ENCODE measurements at regions of chr19 and their contacts with region 1.

Region 1: GRCh38 chr19:17282488-17283255 is 971 bp downstream of the ANKLE1 start:
- DNase-seq: peak; percentile 87
- H3K4me3 Mint-ChIP-seq: peak overlapping the region; percentile 85
- H3K27ac Mint-ChIP-seq: no peak overlapping the region
- H3K4me1 Mint-ChIP-seq: peaks cover 13% of the 10 kb centered on the region
- H3K27me3 Mint-ChIP-seq: no peaks in the 10 kb centered on the region

Region 2: GRCh38 chr19:16771618-16772017 is 511.1 kb before region 1 on chr19:
- CTCF ChIA-PET with region 1: no interaction called
- intact Hi-C with region 1: loop called (anchors 1 kb)
- DNase-seq: peak; percentile 88
- H3K4me3 Mint-ChIP-seq: no peak overlapping the region
- H3K27ac Mint-ChIP-seq: no peak overlapping the region
- H3K4me1 Mint-ChIP-seq: no peaks in the 10 kb centered on the region
- H3K27me3 Mint-ChIP-seq: peaks cover 11% of the 10 kb centered on the region

Region 3: GRCh38 chr19:17205237-17206140 is 77.2 kb before region 1 on chr19:
- CTCF ChIA-PET with region 1: interaction called, 8 read pairs
- intact Hi-C with region 1: loop called (anchors 1 kb)
- DNase-seq: peak; percentile 73
- H3K4me3 Mint-ChIP-seq: no peak overlapping the region
- H3K27ac Mint-ChIP-seq: no peak overlapping the region
- H3K4me1 Mint-ChIP-seq: peaks cover 4% of the 10 kb centered on the region
- H3K27me3 Mint-ChIP-seq: no peaks in the 10 kb centered on the region

Region 4: DNA sequence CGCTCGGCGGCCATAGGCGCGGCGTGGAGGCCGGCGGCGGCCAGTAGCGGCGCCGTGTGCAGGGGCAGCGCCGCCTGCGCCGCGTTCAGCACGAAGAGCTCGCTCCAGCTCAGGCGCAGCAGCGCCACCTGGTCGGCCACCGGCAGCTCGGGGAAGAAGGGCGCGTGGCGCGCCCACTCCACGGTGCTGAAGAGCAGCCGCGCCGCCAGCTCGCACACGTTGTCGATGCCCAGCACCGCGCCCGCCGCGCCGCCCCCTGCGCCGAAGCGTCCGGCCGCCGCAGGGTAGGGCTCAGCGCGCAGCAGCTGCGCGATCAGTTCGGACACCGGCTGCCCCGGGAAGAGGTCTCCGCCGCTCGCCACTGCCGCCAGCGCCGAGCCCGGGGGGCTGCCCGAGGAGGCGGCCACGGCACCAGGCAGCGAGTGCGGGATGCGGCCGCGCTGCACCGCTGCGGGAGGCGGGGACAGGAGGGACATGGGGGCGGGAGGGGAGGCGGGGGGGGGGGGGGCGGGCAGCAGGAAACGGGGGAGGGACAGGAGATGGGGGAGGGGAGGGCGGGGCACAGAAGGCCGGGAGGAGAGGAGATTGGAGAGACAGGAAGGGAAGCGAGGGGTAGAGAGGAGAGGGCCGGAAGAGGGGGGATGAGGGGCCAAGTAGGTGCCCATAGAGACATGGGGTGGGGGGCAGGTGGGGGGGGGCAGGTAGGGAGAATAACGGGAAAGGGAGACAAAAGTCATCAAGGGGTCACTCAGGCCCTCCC is 46.9 kb before region 1 on chr19:
- CTCF ChIA-PET with region 1: interaction called, 3 read pairs
- intact Hi-C with region 1: loop called (anchors 1 kb)
- DNase-seq: peak; percentile 79
- H3K4me3 Mint-ChIP-seq: peak overlapping the region; percentile 83
- H3K27ac Mint-ChIP-seq: peak overlapping the region; percentile 68
- H3K4me1 Mint-ChIP-seq: peaks cover 19% of the 10 kb centered on the region
- H3K27me3 Mint-ChIP-seq: no peaks in the 10 kb centered on the region

Region 5: DNA sequence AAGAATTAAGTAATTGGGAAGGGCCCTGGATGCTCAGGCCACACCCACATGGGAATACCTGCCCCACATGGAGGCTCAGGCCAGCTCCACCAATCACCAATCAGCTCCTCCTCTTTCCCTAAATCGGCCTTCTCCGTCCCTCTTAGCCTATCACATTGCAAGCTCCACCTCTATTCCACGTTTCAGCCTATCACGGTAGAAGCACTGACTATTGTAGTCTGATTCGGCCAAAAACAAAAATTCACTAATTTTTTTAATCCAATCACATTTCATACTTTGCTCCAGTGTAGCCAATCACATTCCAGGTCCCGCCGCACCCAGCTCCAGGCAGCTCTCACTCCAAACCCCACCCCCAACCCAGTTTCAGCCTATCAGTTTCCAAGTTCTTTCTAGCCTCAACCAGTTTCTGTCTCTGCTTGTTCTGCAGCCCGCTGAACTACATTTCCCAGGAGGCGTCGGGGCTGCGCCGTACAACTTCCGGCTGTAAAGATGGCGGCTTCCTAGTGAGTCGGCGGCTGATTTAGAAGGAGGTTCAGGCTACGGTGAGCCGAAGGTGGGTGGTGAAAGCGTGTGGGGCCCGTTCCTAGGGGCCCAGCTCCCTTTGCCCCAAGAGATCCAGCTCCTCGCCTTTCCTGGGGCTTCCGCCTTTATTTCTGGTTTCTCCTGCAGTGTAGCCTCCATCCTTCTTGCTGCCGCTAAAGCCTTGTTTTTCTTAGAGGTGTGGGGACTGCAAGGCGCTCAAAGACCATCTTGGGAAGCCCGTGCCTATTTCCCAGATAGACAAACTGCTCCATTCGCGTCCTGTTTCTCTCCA is 15.5 kb before region 1 on chr19 and contains the start of gene BABAM1:
- CTCF ChIA-PET with region 1: interaction called, 59 read pairs
- intact Hi-C with region 1: no loop called
- DNase-seq: peak; percentile 99
- H3K4me3 Mint-ChIP-seq: peak within 1 kb of the TSS; percentile 87
- H3K27ac Mint-ChIP-seq: peak within 1 kb of the TSS; percentile 85
- H3K4me1 Mint-ChIP-seq: peaks cover 20% of the 10 kb centered on the region
- H3K27me3 Mint-ChIP-seq: no peaks in the 10 kb centered on the region
- total RNA-seq, gene BABAM1: 108 to 109 TPM